Heart left ventricle (tissue), 16 donors: ENCODE measurements at regions of chr6 and their contacts with region 1.

Region 1: GRCh38 chr6:87701676-87702588 is at the start of gene AKIRIN2:
- DNase-seq: peak; percentile 96 to 98 (median 96)
- ATAC-seq: peak; percentile 92 to 96 (median 94)
- H3K4me3 ChIP-seq: peak within 1 kb of the TSS; percentile 56 to 99 (median 86)
- H3K27ac ChIP-seq: peak within 1 kb of the TSS; percentile 82 to 99 (median 96)
- H3K4me1 ChIP-seq: peaks cover 0 to 43% (median 24%) of the 10 kb centered on the region in 12 donors
- H3K27me3 ChIP-seq: no peaks in the 10 kb centered on the region
- CTCF ChIP-seq: peak in 1 of 12 donors; percentile 5
- POLR2A ChIP-seq: peak; percentile 96 to 98
- total RNA-seq, gene AKIRIN2: 15.2 to 54.7 (median 40.7) TPM

Region 2: GRCh38 chr6:87066449-87067333 is 635.2 kb before region 1 on chr6:
- intact Hi-C with region 1: no loop called
- DNase-seq: peak in 3 of 5 donors; percentile 22 to 34 (median 24)
- ATAC-seq: no peak
- H3K4me3 ChIP-seq: peak overlapping the region in 1 of 12 donors; percentile 9
- H3K27ac ChIP-seq: no peak overlapping the region
- H3K4me1 ChIP-seq: no peaks in the 10 kb centered on the region
- H3K27me3 ChIP-seq: peaks cover 0 to 17% (median 0%) of the 10 kb centered on the region in 9 donors
- CTCF ChIP-seq: peak; percentile 20 to 64 (median 52)
- POLR2A ChIP-seq: no peak

Region 3: DNA sequence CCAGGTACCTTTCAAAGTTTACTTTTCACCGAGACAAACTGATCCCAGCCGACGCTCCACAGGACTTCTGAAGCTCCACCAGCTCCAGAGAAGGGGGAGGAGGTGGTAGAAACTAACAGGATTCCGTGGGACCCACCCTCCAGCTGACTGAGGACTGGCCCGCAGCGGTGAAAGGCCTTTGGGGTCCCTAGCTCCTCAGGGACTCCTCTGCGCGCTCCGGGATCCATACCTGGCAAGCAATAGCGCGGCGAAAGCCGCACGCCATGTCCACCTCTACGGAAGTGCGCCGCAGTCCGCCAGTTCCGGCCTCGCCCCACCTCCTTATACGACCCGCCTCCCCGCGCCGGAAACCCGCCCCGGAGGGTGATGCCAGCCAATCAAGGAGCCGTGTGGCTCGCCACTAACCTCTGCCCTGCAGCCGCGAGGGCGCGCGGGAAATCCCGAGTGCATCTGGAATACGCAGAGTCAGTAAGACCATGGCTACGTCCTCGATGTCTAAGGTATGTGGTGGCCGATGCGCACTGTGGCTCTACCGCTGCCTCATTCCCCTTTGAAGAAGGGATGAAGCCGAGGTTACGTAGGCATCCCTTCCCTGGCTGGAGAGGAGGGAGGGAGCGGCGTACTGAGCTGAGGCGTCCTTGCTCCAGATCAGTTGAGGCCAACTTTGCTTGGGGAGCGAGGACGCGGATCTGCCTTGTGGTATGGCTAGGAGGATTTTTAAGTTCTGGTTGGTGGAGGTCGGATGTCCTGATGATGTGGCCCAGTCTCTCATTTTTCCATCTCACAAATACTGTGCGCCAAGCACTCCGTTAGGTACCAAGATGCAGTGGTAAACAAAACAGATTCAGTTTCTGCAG is 112.0 kb before region 1 on chr6 and contains the starts of genes ORC3 and RARS2:
- intact Hi-C with region 1: loop called in 4 of 10 experiments (anchors 2 to 5 kb)
- DNase-seq: peak; percentile 95 to 99 (median 97)
- ATAC-seq: peak; percentile 100
- H3K4me3 ChIP-seq: peak within 1 kb of the TSS; percentile 60 to 96 (median 84)
- H3K27ac ChIP-seq: peak within 1 kb of the TSS; percentile 42 to 92 (median 82)
- H3K4me1 ChIP-seq: peaks cover 6 to 50% (median 30%) of the 10 kb centered on the region in 12 donors
- H3K27me3 ChIP-seq: no peaks in the 10 kb centered on the region
- CTCF ChIP-seq: peak in 1 of 12 donors; percentile 13
- POLR2A ChIP-seq: peak; percentile 9 to 89
- total RNA-seq, gene ORC3: 15.2 to 28.6 (median 20.8) TPM
- total RNA-seq, gene RARS2: 13.3 to 24.2 (median 20.3) TPM

Region 4: GRCh38 chr6:87656857-87657256 is 45.1 kb before region 1 on chr6:
- intact Hi-C with region 1: loop called in 1 of 10 experiments (anchors 5 kb)
- DNase-seq: no peak
- ATAC-seq: no peak
- H3K4me3 ChIP-seq: no peak overlapping the region
- H3K27ac ChIP-seq: no peak overlapping the region
- H3K4me1 ChIP-seq: peaks cover 0 to 18% (median 0%) of the 10 kb centered on the region in 12 donors
- H3K27me3 ChIP-seq: no peaks in the 10 kb centered on the region
- CTCF ChIP-seq: no peak
- POLR2A ChIP-seq: no peak

Region 5: GRCh38 chr6:87799651-87800050 is 97.7 kb after region 1 on chr6:
- intact Hi-C with region 1: loop called in 1 of 10 experiments (anchors 5 kb)
- DNase-seq: no peak
- ATAC-seq: no peak
- H3K4me3 ChIP-seq: no peak overlapping the region
- H3K27ac ChIP-seq: no peak overlapping the region
- H3K4me1 ChIP-seq: no peaks in the 10 kb centered on the region
- H3K27me3 ChIP-seq: no peaks in the 10 kb centered on the region
- CTCF ChIP-seq: no peak
- POLR2A ChIP-seq: no peak